Left cardiac atrium (tissue), 4 donors: ENCODE measurements at regions of chr11 and their contacts with region 1.

Region 1: GRCh38 chr11:80733790-80734189 is 1293.0 kb upstream of the TENM4 start:
- DNase-seq: no peak
- ATAC-seq: no peak

Region 2: DNA sequence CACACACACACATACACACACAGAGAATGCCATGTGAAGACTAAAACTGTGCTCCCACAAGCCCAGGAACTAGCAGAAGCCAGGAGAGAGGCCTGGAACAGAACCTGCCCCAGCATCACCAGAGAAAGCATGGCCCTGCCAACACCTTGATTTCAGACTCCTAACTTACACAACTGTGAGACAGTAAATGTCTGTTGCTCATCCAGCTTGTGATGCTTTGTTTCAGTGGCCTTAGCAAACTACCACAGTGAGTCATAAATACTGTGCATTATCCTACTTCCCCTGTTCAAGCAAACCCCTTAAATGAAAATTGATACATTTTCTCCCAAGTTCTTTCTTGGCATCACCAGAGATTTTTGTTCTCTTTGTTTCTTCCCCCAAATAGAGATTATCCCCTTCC is 246.4 kb after region 1 on chr11:
- intact Hi-C with region 1: loop called in 1 of 2 experiments (anchors 10 kb)
- DNase-seq: no peak
- ATAC-seq: no peak